ENCODE measurements at regions of chr17 and their contacts with region 1.

Region 1: DNA sequence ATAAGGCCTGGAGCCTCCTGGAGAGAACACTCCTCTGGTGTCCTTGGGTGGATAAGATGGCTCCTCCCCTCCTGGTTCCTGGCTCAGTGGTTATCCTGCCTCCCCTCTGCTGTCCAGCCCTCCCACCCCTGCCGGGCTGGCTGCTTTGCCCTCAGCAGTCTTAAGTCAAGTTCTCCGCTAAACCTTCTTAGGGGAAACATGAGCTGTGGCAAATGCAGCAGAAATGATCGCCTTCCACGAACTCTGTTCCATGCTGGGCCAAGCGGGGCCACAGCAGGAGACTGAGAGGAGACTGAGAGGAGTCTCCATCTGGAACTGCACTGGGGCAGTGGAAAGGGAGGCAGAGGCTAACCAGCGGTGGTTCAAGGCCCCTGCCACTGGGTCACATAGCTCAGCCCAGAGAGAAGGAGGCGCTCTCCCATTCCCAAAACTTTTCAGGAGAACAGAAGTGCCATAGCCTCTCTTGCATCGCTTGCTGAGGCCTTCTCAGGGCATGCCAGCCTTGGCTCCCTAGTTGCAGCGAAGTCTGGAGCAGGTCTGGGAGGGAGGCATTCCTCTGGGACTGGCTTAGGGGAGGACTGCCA is 26.9 kb downstream of the TNS4 start:
- DNase-seq: no peak
- H3K4me3 ChIP-seq: no peak overlapping the region
- H3K27ac ChIP-seq: no peak overlapping the region
- H3K4me1 ChIP-seq: no peaks in the 10 kb centered on the region
- H3K27me3 ChIP-seq: peaks cover 0 to 4% of the 10 kb centered on the region in 2 experiments
- CTCF ChIP-seq: no peak
- POLR2A ChIP-seq: no peak

Region 2: DNA sequence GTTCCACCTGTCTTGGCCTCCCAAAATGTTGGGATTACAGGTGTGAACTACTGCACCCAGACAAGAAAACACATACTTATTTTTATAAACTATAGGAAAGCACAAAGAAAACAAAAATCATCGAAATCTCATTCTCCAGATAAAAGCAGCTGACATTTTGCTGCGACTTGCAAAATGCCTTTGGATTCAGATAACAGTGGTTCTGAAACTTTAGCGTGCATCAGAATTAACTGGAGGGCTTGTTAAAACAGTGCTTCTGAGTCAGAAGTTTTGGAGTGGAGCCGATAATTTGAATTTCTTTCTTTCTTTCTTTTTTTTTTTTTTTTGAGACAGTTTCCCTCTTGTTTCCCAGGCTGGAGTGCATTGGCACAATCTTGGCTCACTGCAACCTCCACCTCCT is 92.3 kb before region 1 on chr17:
- CTCF ChIA-PET with region 1: interaction called, 13 read pairs
- POLR2A ChIA-PET with region 1: no interaction called
- dilution Hi-C with region 1: no loop called
- intact Hi-C with region 1: no loop called
- DNase-seq: no peak
- H3K4me3 ChIP-seq: no peak overlapping the region
- H3K27ac ChIP-seq: no peak overlapping the region
- H3K4me1 ChIP-seq: no peaks in the 10 kb centered on the region
- H3K27me3 ChIP-seq: no peaks in the 10 kb centered on the region
- CTCF ChIP-seq: no peak
- POLR2A ChIP-seq: no peak

Region 3: DNA sequence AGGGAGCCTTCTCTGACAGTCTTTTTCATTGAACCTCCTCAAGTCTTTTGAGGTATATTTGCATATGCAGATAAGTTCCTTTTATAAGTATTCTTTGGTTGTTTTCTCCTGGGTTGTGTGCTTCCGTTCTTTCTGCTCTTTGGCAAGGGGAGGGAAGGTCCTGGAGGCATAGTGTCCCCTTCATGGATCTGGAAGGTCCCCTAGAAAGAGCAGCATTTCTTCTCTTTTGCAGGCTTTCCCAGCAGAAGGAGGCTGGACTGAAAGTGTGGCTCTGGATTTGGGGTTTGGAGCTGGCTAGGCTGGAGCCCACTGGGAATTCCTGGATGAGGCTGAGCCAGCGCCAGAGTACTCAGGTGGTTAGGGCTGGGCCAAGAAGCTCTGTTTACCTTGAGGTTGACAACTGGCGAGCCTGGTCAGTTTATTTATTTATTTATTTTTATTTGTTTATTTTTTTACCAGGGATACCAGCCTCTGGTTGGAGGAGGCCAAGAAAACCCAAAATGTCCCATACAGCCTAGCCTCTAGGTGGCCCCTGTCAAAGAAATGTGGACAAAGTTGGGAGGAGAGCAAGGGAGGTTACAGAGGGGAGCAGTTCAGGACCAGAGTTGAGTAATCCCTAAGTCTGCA is 51.4 kb before region 1 on chr17:
- CTCF ChIA-PET with region 1: interaction called, 49 read pairs
- POLR2A ChIA-PET with region 1: interaction called, 3 read pairs
- dilution Hi-C with region 1: no loop called
- intact Hi-C with region 1: no loop called
- DNase-seq: no peak
- H3K4me3 ChIP-seq: no peak overlapping the region
- H3K27ac ChIP-seq: no peak overlapping the region
- H3K4me1 ChIP-seq: peaks cover 10% of the 10 kb centered on the region
- H3K27me3 ChIP-seq: no peaks in the 10 kb centered on the region
- CTCF ChIP-seq: no peak
- POLR2A ChIP-seq: no peak

Region 4: GRCh38 chr17:40457964-40458791 is 16.3 kb before region 1 on chr17:
- CTCF ChIA-PET with region 1: interaction called, 43 read pairs
- POLR2A ChIA-PET with region 1: interaction called, 3 read pairs
- dilution Hi-C with region 1: no loop called
- intact Hi-C with region 1: no loop called
- DNase-seq: no peak
- H3K4me3 ChIP-seq: no peak overlapping the region
- H3K27ac ChIP-seq: no peak overlapping the region
- H3K4me1 ChIP-seq: no peaks in the 10 kb centered on the region
- H3K27me3 ChIP-seq: no peaks in the 10 kb centered on the region
- CTCF ChIP-seq: no peak
- POLR2A ChIP-seq: no peak

Region 5: DNA sequence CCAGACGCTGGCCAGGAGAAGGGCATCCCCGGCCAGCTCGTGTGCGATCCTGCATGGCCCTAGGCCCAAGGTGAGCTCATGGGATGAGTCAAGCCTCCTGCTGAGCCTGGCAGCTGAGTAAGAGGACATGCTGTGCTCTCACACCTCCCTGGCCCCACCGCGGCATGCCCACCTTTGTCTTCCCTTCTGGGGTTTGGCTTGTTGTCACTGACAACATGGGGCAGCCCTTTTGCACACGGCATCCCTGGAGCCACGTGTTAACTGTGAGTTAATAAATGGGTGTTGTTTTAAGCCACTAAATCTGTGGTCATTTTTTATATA is 35.8 kb after region 1 on chr17:
- CTCF ChIA-PET with region 1: interaction called, 28 read pairs
- POLR2A ChIA-PET with region 1: no interaction called
- dilution Hi-C with region 1: no loop called
- intact Hi-C with region 1: no loop called
- DNase-seq: no peak
- H3K4me3 ChIP-seq: no peak overlapping the region
- H3K27ac ChIP-seq: no peak overlapping the region
- H3K4me1 ChIP-seq: no peaks in the 10 kb centered on the region
- H3K27me3 ChIP-seq: peaks cover 0 to 18% of the 10 kb centered on the region in 2 experiments
- CTCF ChIP-seq: no peak
- POLR2A ChIP-seq: no peak

Measured in endothelial cell of umbilical vein (primary cell).